Activated T-helper 2 cell treated with anti-CD3 and anti-CD28 coated beads, Interferon-gamma antibody, Interleukin-2, Interleukin-4, amounts not matched to agents 10 μg/mL and 5 μg/mL and 100 μg/mL, durations not matched to agents 14 hours and 24 hours and 36 hours (primary cell): ENCODE measurements at regions of chr18 and their contacts with region 1.

Region 1: GRCh38 chr18:62844850-62845643 is 129.7 kb downstream of the PHLPP1 start:
- DNase-seq: peak; percentile 20
- H3K4me3 Mint-ChIP-seq: peak overlapping the region; percentile 70
- H3K27ac Mint-ChIP-seq: peak overlapping the region; percentile 90
- H3K4me1 Mint-ChIP-seq: peaks cover 54% of the 10 kb centered on the region
- H3K27me3 Mint-ChIP-seq: no peaks in the 10 kb centered on the region

Region 2: DNA sequence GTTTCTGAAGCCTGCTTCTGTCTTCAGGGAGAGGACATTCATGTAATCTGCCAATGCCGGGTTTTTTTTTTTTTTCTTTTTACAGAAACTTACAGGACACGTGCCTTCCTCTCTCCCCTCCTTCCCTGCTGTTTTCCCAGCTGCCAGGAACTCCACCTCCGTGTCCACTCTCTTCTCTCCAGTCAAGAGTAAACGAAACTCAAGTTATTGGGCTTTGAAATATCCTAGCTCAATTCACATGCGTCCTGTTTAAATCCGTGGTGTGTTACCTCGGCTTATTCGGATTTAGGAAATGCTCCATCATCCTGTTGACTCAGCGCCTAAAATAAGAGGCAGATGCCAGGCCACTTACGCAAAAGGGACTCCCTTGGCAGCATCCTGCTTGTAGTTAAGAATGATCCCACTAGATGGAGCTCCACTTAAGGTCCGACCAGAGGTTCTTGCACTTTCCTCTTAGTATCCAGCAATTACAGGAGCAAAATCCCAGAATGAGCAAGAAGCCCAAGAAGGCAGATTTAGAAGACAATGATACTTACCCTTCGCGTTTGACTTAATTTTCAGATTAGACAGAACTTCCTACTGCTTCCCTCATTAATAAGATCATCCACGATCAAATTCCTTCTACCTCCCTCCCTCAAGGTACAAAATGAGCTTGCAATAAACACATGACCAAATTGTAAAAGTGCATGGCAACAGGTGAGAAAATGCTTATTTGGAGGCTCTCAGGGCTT is 419.4 kb before region 1 on chr18:
- intact Hi-C with region 1: loop called (anchors 1 kb)
- DNase-seq: peak; percentile 55
- H3K4me3 Mint-ChIP-seq: peak overlapping the region; percentile 44
- H3K27ac Mint-ChIP-seq: peak overlapping the region; percentile 72
- H3K4me1 Mint-ChIP-seq: peaks cover 40% of the 10 kb centered on the region
- H3K27me3 Mint-ChIP-seq: no peaks in the 10 kb centered on the region

Region 3: DNA sequence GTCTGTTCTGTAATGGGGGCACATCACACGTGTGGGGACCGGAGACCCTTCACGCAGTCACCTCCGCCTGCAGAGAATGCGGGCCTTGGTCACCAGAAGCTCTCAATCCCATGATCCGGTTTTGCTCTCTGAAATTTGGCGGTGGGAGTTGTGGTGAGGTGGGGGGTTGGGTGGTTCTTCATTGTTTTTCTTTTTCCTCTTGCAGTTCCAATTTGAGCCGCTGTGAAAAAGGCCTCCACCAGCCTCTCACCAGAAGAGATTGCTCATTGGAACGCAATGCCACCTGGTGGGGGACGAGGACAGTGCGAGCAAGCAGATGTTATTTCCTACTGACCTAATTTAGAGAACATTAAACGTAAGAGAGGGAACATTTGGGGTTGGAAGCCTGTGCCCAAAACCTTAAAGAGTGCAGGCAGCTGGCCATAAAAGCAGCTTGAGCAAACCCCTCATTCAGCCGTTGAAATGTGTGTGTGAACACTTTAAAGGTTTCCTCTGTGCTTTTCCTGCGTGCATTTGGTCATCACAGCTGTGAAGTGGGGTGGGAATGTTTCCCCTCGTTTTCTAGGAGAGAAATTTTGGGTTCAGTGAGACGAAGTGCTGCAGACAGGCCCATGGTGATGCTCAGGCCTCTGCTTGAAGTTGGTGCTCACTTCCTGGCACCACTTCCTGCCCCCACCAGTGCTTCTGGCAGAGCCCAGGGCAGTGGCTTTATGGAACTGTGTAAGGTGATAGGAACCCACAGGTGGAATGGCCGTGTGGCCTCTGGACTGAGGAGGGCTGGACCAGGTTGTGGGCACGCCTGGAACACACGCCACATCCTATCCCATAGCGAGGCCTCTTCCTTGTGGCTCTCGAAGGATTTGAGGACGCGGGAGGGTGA is 260.6 kb before region 1 on chr18:
- intact Hi-C with region 1: loop called (anchors 1 kb)
- DNase-seq: peak; percentile 77
- H3K4me3 Mint-ChIP-seq: peak overlapping the region; percentile 28
- H3K27ac Mint-ChIP-seq: peak overlapping the region; percentile 46
- H3K4me1 Mint-ChIP-seq: peaks cover 35% of the 10 kb centered on the region
- H3K27me3 Mint-ChIP-seq: no peaks in the 10 kb centered on the region

Region 4: DNA sequence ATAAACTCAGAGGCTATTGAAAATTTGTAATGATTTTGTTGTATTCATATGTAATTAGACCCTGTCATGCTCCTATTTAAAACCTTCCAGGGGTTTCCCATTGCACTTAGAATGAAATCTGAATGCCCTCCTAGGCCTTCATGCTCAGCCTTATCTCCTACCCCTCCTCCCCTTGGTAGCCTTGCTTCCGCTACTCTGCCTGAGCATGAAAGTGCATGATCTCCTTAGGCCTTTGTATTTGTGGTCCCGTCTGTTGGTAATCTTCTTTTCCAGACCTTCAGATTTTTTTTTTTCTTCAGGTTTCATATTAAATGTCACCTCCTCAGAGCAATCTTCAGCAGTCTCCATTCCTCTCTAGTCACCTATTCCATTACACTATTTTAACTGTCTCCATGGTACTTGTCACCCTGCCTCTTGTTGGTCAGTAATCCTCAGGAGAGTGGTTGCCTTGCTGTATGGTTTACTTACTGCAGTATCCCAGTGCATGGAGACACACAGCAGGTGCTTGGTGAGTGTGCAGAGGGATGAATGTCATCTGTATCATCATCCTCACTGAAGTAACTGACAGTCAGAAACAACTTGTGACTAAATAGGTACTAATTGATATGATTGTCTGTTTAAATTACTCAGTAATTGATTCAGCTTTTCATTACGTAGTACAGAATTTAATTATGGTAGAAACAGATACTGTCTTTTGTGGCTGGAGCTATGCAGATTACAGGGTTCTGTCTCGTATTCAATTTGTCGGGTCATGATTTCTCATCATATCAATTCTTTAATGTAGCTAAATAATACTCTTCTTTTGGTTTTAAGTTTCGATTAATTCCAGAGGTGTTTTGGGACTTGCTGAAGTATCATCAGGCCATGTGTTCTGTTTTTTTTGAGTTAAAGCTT is 65.8 kb before region 1 on chr18:
- intact Hi-C with region 1: loop called (anchors 1 kb)
- DNase-seq: no peak
- H3K4me3 Mint-ChIP-seq: peak overlapping the region; percentile 14
- H3K27ac Mint-ChIP-seq: peak overlapping the region; percentile 77
- H3K4me1 Mint-ChIP-seq: peaks cover 69% of the 10 kb centered on the region
- H3K27me3 Mint-ChIP-seq: no peaks in the 10 kb centered on the region

Region 5: DNA sequence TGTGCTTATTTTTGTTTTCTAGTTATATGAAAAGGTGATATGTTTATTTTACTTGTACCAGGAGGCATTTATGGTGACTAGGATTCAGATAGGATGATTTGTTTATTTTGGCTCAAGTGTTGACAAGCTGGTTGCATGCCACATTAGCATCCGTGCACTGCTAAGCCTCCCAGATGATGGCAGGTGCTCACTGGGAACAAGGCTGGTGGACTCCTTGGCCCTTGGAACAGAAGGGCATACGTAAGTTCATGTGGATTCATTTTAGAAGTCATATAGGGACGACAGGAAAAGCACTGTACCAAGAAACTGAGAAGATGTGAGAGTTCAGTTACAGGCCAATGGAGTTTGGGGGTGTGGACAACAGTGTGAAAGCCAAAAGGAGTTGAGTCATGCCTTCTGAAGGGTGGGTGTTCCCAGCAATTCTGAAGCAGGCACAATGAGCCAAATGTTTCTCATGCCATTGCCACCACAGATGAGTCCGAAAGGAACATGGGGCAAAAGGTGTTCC is 36.5 kb after region 1 on chr18:
- intact Hi-C with region 1: loop called (anchors 5 kb)
- DNase-seq: no peak
- H3K4me3 Mint-ChIP-seq: no peak overlapping the region
- H3K27ac Mint-ChIP-seq: no peak overlapping the region
- H3K4me1 Mint-ChIP-seq: peaks cover 40% of the 10 kb centered on the region
- H3K27me3 Mint-ChIP-seq: no peaks in the 10 kb centered on the region

Region 6: DNA sequence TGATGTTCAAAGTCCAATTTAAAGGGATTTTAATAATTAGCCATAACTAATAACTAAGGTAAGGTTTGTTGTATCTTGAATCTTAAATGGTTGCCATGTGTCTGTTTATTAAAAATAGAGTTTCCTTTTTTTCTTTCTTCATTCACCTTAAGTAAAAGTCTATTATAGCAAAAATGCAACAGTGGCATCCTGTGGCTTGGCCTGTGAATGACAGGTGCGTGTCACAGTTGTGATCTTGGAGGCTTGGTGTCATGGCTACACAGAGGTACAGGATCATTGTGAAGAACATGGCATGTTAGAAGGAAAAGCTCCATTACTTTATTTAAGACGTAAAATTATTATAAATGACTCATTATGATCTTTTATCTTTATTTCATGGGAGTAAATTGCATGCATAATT is 228.4 kb after region 1 on chr18:
- intact Hi-C with region 1: no loop called
- DNase-seq: no peak
- H3K4me3 Mint-ChIP-seq: no peak overlapping the region
- H3K27ac Mint-ChIP-seq: no peak overlapping the region
- H3K4me1 Mint-ChIP-seq: peaks cover 9% of the 10 kb centered on the region
- H3K27me3 Mint-ChIP-seq: peaks cover 22% of the 10 kb centered on the region

Region 7: DNA sequence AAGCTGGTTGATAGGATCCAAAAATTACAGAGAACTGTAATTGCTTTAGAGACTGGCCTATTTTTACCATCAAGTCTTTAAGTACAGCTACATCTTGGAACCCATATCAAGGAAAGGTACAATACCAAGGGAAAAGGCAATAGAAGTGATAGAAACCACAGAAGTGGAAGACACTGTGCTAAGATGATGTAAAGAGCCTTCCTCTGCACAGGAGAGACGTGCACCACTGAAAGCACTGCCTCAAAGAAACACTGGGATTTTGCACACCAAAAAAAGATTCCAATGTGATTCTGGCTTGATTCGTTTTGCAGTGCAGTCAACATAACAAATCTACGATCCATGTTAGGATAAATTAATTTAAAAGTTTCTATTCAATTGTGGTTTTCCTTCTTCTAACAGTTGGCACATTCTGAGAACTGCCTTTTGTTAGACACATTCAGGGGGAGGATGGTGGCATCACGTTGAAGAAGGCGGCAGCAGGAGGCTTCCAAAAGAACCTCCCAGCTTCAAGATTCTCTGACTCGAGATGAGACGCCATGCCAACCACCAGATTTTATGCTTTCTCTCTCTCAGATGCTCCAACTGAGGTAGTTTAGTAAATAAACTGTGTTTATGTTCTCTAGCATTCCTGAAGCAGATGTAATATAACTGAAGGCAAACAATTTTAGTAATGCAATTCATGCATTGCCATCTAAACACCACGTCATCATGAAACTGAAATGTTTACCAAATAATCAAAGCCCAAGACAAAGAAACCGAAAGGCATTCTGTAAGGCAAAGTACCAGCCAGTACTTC is 371.7 kb after region 1 on chr18:
- intact Hi-C with region 1: loop called (anchors 5 kb)
- DNase-seq: no peak
- H3K4me3 Mint-ChIP-seq: peak overlapping the region; percentile 57
- H3K27ac Mint-ChIP-seq: peak overlapping the region; percentile 91
- H3K4me1 Mint-ChIP-seq: peaks cover 88% of the 10 kb centered on the region
- H3K27me3 Mint-ChIP-seq: no peaks in the 10 kb centered on the region